WTC11 (cell line): ENCODE measurements at regions of chr2 and their contacts with region 1.

Region 1: DNA sequence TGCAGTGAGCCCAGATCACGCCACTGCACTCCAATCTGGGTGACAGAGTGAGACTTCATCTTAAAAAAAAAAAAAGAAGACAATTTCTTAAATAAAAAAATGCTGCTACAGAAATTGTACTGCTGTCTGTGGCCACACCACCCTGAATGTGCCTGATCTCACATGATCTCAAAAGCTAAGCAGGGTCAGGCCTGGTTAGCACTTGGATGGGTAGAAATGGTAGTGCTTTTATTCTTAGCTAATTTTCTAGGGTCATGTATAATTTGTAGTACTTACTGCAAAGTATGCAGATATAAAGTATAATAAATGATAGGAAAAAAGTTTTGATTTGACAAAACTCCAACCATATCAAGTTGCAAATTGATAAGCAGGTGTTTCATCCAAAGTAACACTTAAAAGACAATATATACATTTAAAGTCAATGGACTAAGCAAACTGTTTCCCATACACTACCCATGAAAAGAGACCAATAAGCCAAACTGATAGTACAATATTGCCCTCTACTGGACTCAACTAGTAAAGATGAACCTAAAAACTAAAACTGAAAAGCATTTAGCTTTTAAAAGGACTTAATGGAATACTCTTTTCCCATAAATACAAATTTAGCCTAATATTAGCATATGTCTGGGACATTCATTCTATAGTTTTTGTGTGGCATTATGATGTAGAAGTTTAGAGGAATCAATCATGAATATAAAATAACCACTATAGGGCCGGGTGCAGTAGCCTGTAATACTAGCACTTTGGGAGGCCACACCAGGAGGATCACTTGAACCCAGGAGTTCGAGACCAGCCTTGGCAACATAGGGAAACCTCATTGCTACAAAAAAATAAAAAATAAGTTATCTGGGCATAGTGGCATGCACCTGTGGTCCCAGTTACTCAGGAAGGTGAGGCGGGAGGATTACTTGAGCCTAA is 18.6 kb upstream of the PEX13 start:
- DNase-seq: no peak
- ATAC-seq: peak; percentile 66
- H3K4me3 Mint-ChIP-seq: no peak overlapping the region
- H3K27ac Mint-ChIP-seq: no peak overlapping the region
- H3K4me1 Mint-ChIP-seq: peaks cover 4% of the 10 kb centered on the region; the same call in 1 of the 2 replicates
- H3K27me3 Mint-ChIP-seq: peaks cover under 1% of the 10 kb centered on the region; the same call in 1 of the 2 replicates
- CTCF ChIP-seq: peak; percentile 58

Region 2: GRCh38 chr2:60707750-60708371 is 291.0 kb before region 1 on chr2:
- CTCF ChIA-PET with region 1: interaction called, 22 read pairs
- POLR2A ChIA-PET with region 1: no interaction called
- DNase-seq: peak; percentile 30
- ATAC-seq: peak; percentile 74
- H3K4me3 Mint-ChIP-seq: no peak overlapping the region
- H3K27ac Mint-ChIP-seq: no peak overlapping the region
- H3K4me1 Mint-ChIP-seq: peaks cover 8% of the 10 kb centered on the region
- H3K27me3 Mint-ChIP-seq: no peaks in the 10 kb centered on the region
- CTCF ChIP-seq: peak; percentile 63; the same call in 1 of the 2 replicates

Region 3: DNA sequence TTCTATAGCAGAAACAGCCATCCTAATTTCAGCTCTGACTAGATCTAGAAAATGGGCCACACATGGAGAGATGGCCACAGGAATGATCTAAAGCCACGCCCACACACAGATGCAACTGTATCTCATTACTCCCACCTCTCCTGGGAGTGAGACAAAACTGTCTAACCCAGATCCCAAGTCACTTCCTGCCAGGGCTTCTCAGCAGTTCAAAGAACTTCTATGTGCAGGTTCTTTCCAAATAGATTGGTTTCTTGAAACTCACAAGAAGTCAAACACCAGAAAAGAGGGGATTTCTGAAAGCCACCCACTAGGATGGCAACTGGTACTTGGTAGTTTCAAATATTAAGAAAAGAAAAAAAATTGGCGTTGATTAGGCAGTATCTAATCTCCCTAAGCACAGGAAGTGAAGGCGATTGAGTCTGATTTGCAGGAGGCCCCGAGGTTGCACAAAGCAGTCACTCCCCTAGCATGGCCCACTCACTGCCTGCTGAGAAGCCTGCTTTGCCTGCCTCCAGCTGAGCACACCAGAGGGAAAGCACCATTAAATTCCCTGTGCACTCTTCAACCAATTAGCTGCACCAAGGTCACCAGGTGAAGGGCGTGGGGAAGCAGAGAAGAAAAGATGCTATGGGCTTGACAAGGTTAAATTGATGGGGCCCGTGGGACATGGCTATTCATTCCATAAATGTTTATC is 191.8 kb before region 1 on chr2:
- CTCF ChIA-PET with region 1: interaction called, 22 read pairs
- POLR2A ChIA-PET with region 1: no interaction called
- DNase-seq: no peak
- ATAC-seq: peak; percentile 27
- H3K4me3 Mint-ChIP-seq: no peak overlapping the region
- H3K27ac Mint-ChIP-seq: no peak overlapping the region
- H3K4me1 Mint-ChIP-seq: peaks cover 26% of the 10 kb centered on the region
- H3K27me3 Mint-ChIP-seq: no peaks in the 10 kb centered on the region; the same call in 1 of the 2 replicates
- CTCF ChIP-seq: no peak

Region 4: GRCh38 chr2:60818272-60818671 is 180.6 kb before region 1 on chr2:
- CTCF ChIA-PET with region 1: interaction called, 12 read pairs
- POLR2A ChIA-PET with region 1: no interaction called
- DNase-seq: no peak
- ATAC-seq: no peak; the same call in 1 of the 2 replicates
- H3K4me3 Mint-ChIP-seq: no peak overlapping the region
- H3K27ac Mint-ChIP-seq: no peak overlapping the region
- H3K4me1 Mint-ChIP-seq: 0 out of 2 replicates have a peak, but pooled peaks cover 3% of the 10 kb centered on the region
- H3K27me3 Mint-ChIP-seq: no peaks in the 10 kb centered on the region
- CTCF ChIP-seq: no peak

Region 5: GRCh38 chr2:60881047-60881932 is 117.6 kb before region 1 on chr2 and contains the start of gene REL:
- CTCF ChIA-PET with region 1: interaction called, 13 read pairs
- POLR2A ChIA-PET with region 1: no interaction called
- DNase-seq: peak; percentile 89
- ATAC-seq: peak; percentile 93
- H3K4me3 Mint-ChIP-seq: peak within 1 kb of the TSS; percentile 90
- H3K27ac Mint-ChIP-seq: peak within 1 kb of the TSS; percentile 95
- H3K4me1 Mint-ChIP-seq: peaks cover 36% of the 10 kb centered on the region
- H3K27me3 Mint-ChIP-seq: peaks cover 8% of the 10 kb centered on the region
- CTCF ChIP-seq: no peak
- total RNA-seq, gene REL: 6.9 to 8.4 TPM (median 7.0 TPM) in 3 replicates

Region 6: DNA sequence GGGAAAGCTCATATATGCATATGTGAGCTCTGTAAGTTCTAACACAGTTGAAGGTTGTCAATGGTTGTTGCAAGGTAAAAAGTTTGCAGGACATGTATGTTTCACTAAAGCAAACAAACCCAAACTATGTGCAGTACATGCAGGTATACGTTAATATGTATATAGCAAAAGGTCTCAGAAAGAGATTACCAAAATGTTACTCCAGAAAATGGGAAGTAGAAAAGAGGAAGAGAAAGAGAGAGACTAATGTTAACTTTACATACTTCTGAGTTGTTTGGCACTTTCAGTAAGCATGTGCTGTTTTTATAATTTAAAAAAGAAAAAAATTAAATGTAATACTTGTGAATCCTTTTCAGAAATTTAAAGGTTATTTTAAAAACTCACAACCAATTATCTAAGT is 14.2 kb before region 1 on chr2:
- CTCF ChIA-PET with region 1: no interaction called
- POLR2A ChIA-PET with region 1: no interaction called
- DNase-seq: no peak
- ATAC-seq: no peak
- H3K4me3 Mint-ChIP-seq: no peak overlapping the region
- H3K27ac Mint-ChIP-seq: no peak overlapping the region
- H3K4me1 Mint-ChIP-seq: no peaks in the 10 kb centered on the region
- H3K27me3 Mint-ChIP-seq: no peaks in the 10 kb centered on the region
- CTCF ChIP-seq: no peak

Region 7: DNA sequence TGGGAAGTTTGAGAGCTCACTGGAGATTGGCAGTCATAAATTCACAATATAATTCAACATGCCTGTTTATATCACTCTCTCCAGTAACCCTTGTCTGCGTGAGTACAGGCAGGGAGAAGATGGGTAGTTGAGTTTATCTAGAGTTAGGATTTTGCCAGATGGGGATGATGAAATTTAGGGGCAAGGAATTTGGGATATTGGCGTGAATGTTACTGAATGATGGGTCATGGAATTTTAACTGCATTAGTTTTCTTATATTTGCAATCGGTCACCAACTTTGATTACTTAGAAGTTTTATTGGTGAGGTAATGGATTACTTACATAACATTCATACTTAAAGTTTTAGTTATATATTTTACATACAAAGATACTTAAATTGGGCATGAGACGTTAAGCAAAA is 101.9 kb after region 1 on chr2:
- CTCF ChIA-PET with region 1: no interaction called
- POLR2A ChIA-PET with region 1: no interaction called
- DNase-seq: no peak
- ATAC-seq: no peak
- H3K4me3 Mint-ChIP-seq: no peak overlapping the region
- H3K27ac Mint-ChIP-seq: no peak overlapping the region
- H3K4me1 Mint-ChIP-seq: no peaks in the 10 kb centered on the region
- H3K27me3 Mint-ChIP-seq: no peaks in the 10 kb centered on the region
- CTCF ChIP-seq: no peak

Region 8: GRCh38 chr2:61185329-61185728 is 186.4 kb after region 1 on chr2:
- CTCF ChIA-PET with region 1: no interaction called
- POLR2A ChIA-PET with region 1: no interaction called
- DNase-seq: no peak
- ATAC-seq: peak; percentile 55
- H3K4me3 Mint-ChIP-seq: no peak overlapping the region
- H3K27ac Mint-ChIP-seq: peak overlapping the region; percentile 24
- H3K4me1 Mint-ChIP-seq: peaks cover 14% of the 10 kb centered on the region
- H3K27me3 Mint-ChIP-seq: no peaks in the 10 kb centered on the region
- CTCF ChIP-seq: no peak